CD4-positive, alpha-beta memory T cell (primary cell): ENCODE measurements at regions of chr1 and their contacts with region 1.

Region 1: DNA sequence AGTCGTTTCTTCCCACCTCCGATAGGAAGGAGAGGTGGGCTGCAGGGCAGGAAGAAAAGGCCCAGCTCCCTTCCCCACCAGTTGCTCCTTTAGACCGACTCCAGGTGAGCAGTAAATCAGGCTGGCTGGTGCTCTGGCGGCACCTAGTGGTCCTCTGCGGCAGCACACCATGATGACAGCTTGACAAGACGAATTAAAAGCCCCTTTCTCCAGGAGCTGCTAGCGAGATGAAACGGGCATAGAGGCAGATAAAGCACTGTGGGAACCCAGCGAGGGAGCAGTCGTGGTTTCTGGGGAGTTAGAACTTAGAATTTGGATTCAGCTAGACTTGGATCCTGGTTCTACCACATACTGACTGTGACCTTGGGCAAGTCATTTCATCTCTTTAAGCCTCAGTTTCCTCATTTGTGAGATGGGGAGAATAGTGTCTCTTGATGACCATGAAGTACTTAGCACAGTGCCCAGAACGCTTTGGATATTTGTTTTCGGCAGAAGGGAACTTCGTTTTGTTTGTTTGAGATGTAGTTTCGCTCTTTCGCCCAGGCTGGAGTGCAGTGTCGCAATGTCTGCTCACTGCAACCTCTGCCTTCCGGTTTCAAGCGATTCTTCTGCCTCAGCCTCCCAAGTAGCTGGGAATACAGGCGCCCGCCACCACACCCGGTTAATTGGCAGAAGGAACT is 21.8 kb upstream of the COL9A2 start:
- DNase-seq: peak; percentile 86 to 89 (median 87)
- H3K4me3 ChIP-seq: no peak overlapping the region
- H3K4me3 Mint-ChIP-seq: peak overlapping the region; percentile 0 to 62 (median 50)
- H3K27ac ChIP-seq: no peak overlapping the region
- H3K27ac Mint-ChIP-seq: peak overlapping the region in 6 of 7 donors; percentile 1 to 94 (median 58)
- H3K4me1 ChIP-seq: peaks cover 31% of the 10 kb centered on the region
- H3K4me1 Mint-ChIP-seq: peaks cover 20 to 42% (median 31%) of the 10 kb centered on the region in 4 donors
- H3K27me3 ChIP-seq: no peaks in the 10 kb centered on the region
- H3K27me3 Mint-ChIP-seq: no peaks in the 10 kb centered on the region

Region 2: GRCh38 chr1:40078512-40079333 is 260.2 kb before region 1 on chr1:
- CTCF ChIA-PET with region 1: interaction called, 19 read pairs
- POLR2A ChIA-PET with region 1: no interaction called
- intact Hi-C with region 1: loop called (anchors 1 kb)
- DNase-seq: peak; percentile 41 to 64 (median 45)
- H3K4me3 ChIP-seq: no peak overlapping the region
- H3K4me3 Mint-ChIP-seq: no peak overlapping the region
- H3K27ac ChIP-seq: no peak overlapping the region
- H3K27ac Mint-ChIP-seq: peak overlapping the region in 5 of 7 donors; percentile 12 to 81 (median 70)
- H3K4me1 ChIP-seq: peaks cover 1% of the 10 kb centered on the region
- H3K4me1 Mint-ChIP-seq: peaks cover 2 to 11% (median 3%) of the 10 kb centered on the region in 4 donors
- H3K27me3 ChIP-seq: no peaks in the 10 kb centered on the region
- H3K27me3 Mint-ChIP-seq: no peaks in the 10 kb centered on the region

Region 3: DNA sequence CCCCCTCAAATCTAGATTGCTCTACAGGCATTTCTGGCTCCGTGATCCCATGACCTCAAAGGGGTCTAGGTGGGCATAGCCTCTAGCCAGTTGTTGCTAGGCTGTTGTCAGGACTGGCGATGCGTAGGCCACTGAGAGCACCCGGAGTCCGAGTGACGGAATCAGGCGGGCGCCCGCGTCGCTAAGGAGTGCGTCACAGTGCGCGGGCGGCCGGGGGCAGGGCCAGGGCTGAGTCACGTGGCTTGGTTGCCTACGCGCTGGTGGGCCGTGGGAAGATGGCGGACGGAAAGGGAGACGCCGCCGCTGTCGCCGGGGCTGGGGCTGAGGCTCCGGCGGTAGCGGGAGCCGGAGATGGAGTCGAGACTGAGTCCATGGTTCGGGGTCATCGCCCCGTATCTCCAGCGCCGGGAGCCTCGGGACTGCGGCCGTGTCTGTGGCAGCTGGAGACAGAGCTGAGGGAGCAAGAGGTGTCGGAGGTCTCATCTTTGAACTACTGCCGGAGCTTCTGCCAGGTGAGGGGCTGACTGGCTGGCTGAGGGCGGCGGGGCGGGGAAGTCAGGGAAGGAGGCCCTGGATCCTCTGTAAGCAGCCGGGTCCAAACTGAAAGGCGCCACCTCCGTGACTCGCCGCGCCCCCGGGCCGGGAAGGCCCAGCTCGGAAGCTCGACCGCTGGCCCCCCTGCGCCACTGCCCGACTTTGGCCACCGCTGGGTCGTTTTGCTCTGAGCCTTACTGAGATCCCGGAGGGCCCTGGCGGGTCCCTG is 177.6 kb before region 1 on chr1 and contains the start of gene RLF:
- CTCF ChIA-PET with region 1: interaction called, 278 read pairs
- POLR2A ChIA-PET with region 1: interaction called, 5 read pairs
- intact Hi-C with region 1: no loop called
- DNase-seq: peak; percentile 93 to 95 (median 94)
- H3K4me3 ChIP-seq: peak within 1 kb of the TSS; percentile 77 to 94
- H3K4me3 Mint-ChIP-seq: peak within 1 kb of the TSS in 1 of 8 donors; percentile 60
- H3K27ac ChIP-seq: peak within 1 kb of the TSS; percentile 97
- H3K27ac Mint-ChIP-seq: peak within 1 kb of the TSS in 1 of 7 donors; percentile 99
- H3K4me1 ChIP-seq: peaks cover 49% of the 10 kb centered on the region
- H3K4me1 Mint-ChIP-seq: peaks cover 8 to 29% (median 19%) of the 10 kb centered on the region in 4 donors
- H3K27me3 ChIP-seq: no peaks in the 10 kb centered on the region
- H3K27me3 Mint-ChIP-seq: no peaks in the 10 kb centered on the region
- total RNA-seq, gene RLF: 23.0 to 23.4 TPM

Region 4: DNA sequence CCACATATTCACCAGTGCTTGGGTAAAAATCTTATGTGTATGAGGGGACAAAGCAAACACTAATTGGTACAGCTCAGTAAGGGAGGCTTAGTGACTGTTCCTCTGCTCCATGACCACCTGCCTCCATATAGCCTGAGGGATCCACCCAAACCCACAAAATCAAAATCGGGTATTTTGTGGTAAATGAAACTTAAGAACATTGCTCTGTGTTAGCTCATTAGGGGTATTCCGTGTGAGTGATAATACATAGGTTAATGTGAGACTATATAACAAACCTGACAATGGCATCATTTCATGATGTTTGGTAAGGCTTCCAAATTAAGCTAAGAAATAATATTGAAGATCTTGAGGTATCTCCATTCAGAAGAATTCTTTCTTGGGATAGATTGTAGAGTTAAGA is 47.6 kb before region 1 on chr1:
- CTCF ChIA-PET with region 1: interaction called, 11 read pairs
- POLR2A ChIA-PET with region 1: no interaction called
- intact Hi-C with region 1: no loop called
- DNase-seq: no peak
- H3K4me3 ChIP-seq: no peak overlapping the region
- H3K4me3 Mint-ChIP-seq: no peak overlapping the region
- H3K27ac ChIP-seq: no peak overlapping the region
- H3K27ac Mint-ChIP-seq: peak overlapping the region in 2 of 7 donors; percentile 18 to 78
- H3K4me1 ChIP-seq: no peaks in the 10 kb centered on the region
- H3K4me1 Mint-ChIP-seq: no peaks in the 10 kb centered on the region
- H3K27me3 ChIP-seq: no peaks in the 10 kb centered on the region
- H3K27me3 Mint-ChIP-seq: no peaks in the 10 kb centered on the region

Region 5: DNA sequence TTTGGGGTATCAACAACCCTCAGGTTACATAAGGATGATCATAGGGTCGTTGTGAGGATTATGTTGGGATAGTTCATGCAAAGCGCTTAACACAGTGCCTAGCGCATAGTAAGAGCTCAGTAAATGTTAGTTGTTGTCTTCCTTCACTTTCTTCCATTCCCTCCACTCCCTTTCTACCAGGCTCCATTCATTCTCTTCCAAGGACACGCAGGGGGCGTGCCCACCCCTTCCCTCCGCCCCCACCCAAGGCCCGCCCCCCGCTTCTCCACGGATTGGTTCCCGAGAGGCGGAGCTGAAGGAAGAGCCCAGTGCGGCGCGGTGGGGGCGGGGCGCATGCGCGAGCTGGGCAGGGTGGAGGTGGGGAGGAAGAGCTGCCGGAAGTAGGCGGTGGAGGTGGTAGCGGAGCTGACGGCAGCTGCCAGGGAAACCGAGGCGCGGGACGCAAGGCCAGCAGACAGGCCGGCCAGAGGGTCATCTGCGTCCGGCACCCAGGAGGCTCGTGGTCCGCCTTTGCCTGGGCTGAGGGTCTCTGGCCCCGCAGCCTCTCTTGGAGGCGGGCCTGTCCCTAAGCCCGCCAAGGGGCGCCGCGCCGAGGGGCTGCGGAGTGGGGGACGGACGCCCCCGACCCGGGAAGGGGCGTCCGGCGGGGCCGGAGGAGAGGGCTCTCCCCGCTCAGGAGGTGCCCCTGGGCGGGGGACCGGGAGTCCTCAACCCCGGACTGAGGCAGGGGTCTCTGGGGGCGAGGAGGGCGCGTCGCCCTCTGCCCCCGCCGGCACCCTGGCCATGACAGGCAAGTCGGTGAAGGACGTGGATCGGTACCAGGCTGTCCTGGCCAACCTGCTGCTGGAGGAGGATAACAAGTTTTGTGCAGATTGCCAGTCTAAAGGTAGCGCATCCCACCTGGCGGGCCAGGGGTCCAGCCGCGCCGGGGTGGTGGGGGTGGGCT is 34.7 kb after region 1 on chr1 and contains the start of gene SMAP2:
- CTCF ChIA-PET with region 1: interaction called, 21 read pairs
- POLR2A ChIA-PET with region 1: interaction called, 12 read pairs
- intact Hi-C with region 1: no loop called
- DNase-seq: peak; percentile 94 to 96 (median 96)
- H3K4me3 ChIP-seq: peak within 1 kb of the TSS; percentile 84 to 90
- H3K4me3 Mint-ChIP-seq: peak within 1 kb of the TSS; percentile 98 to 100 (median 99)
- H3K27ac ChIP-seq: peak within 1 kb of the TSS; percentile 96
- H3K27ac Mint-ChIP-seq: peak within 1 kb of the TSS; percentile 97 to 100 (median 99)
- H3K4me1 ChIP-seq: peaks cover 45% of the 10 kb centered on the region
- H3K4me1 Mint-ChIP-seq: peaks cover 31 to 67% (median 49%) of the 10 kb centered on the region in 4 donors
- H3K27me3 ChIP-seq: no peaks in the 10 kb centered on the region
- H3K27me3 Mint-ChIP-seq: peaks cover 0 to 6% of the 10 kb centered on the region in 2 donors
- total RNA-seq, gene SMAP2: 123 TPM

Region 6: DNA sequence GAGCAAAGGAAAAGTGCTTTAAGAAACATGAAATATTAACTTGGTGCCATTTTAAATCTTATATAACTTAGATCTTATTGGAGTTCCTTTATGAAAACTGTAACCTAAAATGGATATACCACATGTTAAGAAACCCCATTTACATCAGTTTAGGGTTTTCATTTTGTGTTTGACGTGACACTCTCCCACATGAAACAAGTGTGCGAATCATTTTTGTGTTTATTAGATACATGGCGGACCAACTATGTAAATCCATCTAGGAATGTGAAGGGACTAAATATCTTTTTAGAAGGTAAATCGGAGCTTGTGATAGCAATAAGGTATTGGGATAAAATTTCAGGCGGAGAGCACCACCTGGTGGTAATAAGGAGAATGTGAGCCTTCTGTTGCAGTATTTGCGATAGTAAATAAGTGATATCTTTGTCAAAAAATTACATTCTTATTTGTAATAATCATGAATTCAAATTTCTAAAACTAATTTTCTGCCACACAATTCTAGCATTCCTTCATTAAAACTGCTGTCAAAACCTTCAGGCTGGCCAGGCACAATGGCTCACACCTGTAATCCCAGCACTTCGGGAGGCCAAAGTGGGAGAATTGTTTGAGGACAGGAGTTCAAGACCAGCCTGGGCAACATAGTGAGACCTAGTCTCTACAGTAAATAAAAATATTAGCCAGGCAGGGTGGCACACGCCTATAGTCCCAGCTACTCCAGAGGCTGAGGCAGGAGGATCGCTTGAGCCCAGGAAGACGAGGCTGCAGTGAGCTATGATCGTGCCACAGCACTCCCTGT is 66.0 kb after region 1 on chr1:
- CTCF ChIA-PET with region 1: interaction called, 87 read pairs
- POLR2A ChIA-PET with region 1: interaction called, 19 read pairs
- intact Hi-C with region 1: loop called (anchors 1 kb)
- DNase-seq: peak; percentile 70 to 79 (median 75)
- H3K4me3 ChIP-seq: no peak overlapping the region
- H3K4me3 Mint-ChIP-seq: peak overlapping the region; percentile 12 to 84 (median 60)
- H3K27ac ChIP-seq: peak overlapping the region; percentile 60
- H3K27ac Mint-ChIP-seq: peak overlapping the region; percentile 67 to 98 (median 96)
- H3K4me1 ChIP-seq: peaks cover 61% of the 10 kb centered on the region
- H3K4me1 Mint-ChIP-seq: peaks cover 41 to 74% (median 64%) of the 10 kb centered on the region in 4 donors
- H3K27me3 ChIP-seq: no peaks in the 10 kb centered on the region
- H3K27me3 Mint-ChIP-seq: no peaks in the 10 kb centered on the region

Region 7: GRCh38 chr1:40862008-40862863 is 523.4 kb after region 1 on chr1 and contains the start of gene CITED4:
- CTCF ChIA-PET with region 1: no interaction called
- POLR2A ChIA-PET with region 1: no interaction called
- intact Hi-C with region 1: no loop called
- DNase-seq: peak; percentile 95
- H3K4me3 ChIP-seq: peak within 1 kb of the TSS; percentile 57 to 79
- H3K4me3 Mint-ChIP-seq: peak within 1 kb of the TSS; percentile 94 to 99 (median 98)
- H3K27ac ChIP-seq: peak within 1 kb of the TSS; percentile 63
- H3K27ac Mint-ChIP-seq: peak within 1 kb of the TSS; percentile 89 to 99 (median 98)
- H3K4me1 ChIP-seq: peaks cover 14% of the 10 kb centered on the region
- H3K4me1 Mint-ChIP-seq: peaks cover 7 to 15% (median 10%) of the 10 kb centered on the region in 4 donors
- H3K27me3 ChIP-seq: no peaks in the 10 kb centered on the region
- H3K27me3 Mint-ChIP-seq: peaks cover 0 to 4% of the 10 kb centered on the region in 2 donors
- total RNA-seq, gene CITED4: 8.1 to 8.4 TPM